Breast epithelium (tissue), 4 donors: ENCODE measurements at regions of chr16 and their contacts with region 1.

Region 1: GRCh38 chr16:70679666-70680494 is 6.0 kb downstream of the MTSS2 start:
- DNase-seq: no peak
- H3K4me3 ChIP-seq: peak overlapping the region in 1 of 3 donors; percentile 54
- H3K27ac ChIP-seq: peak overlapping the region; percentile 85 to 93
- H3K4me1 ChIP-seq: peaks cover 13 to 47% of the 10 kb centered on the region in 2 donors
- H3K27me3 ChIP-seq: no peaks in the 10 kb centered on the region
- CTCF ChIP-seq: peak in 1 of 3 donors; percentile 47
- POLR2A ChIP-seq: no peak

Region 2: GRCh38 chr16:70737377-70738082 is 57.6 kb after region 1 on chr16:
- intact Hi-C with region 1: loop called (anchors 5 kb)
- DNase-seq: peak; percentile 78 to 91
- H3K4me3 ChIP-seq: peak overlapping the region in 1 of 3 donors; percentile 51
- H3K27ac ChIP-seq: peak overlapping the region; percentile 93 to 97
- H3K4me1 ChIP-seq: peaks cover 19 to 24% of the 10 kb centered on the region in 2 donors
- H3K27me3 ChIP-seq: no peaks in the 10 kb centered on the region
- CTCF ChIP-seq: no peak
- POLR2A ChIP-seq: no peak

Region 3: GRCh38 chr16:70770626-70771552 is 91.0 kb after region 1 on chr16:
- intact Hi-C with region 1: loop called (anchors 5 kb)
- DNase-seq: peak; percentile 56 to 66
- H3K4me3 ChIP-seq: no peak overlapping the region
- H3K27ac ChIP-seq: no peak overlapping the region
- H3K4me1 ChIP-seq: no peaks in the 10 kb centered on the region
- H3K27me3 ChIP-seq: no peaks in the 10 kb centered on the region
- CTCF ChIP-seq: peak; percentile 83 to 96 (median 93)
- POLR2A ChIP-seq: no peak